ENCODE measurements at regions of chr17 and their contacts with region 1.

Region 1: GRCh38 chr17:29010586-29010985 is 4.8 kb upstream of the SEZ6 start:
- DNase-seq: no peak
- H3K4me3 ChIP-seq: no peak overlapping the region
- H3K27ac ChIP-seq: no peak overlapping the region
- H3K4me1 ChIP-seq: no peaks in the 10 kb centered on the region
- CTCF ChIP-seq: no peak

Region 2: GRCh38 chr17:28661635-28662537 is 348.7 kb before region 1 on chr17 and contains the starts of genes SDF2 and SUPT6H:
- CTCF ChIA-PET with region 1: no interaction called
- POLR2A ChIA-PET with region 1: no interaction called
- intact Hi-C with region 1: no loop called
- DNase-seq: peak; percentile 90
- H3K4me3 ChIP-seq: peak within 1 kb of the TSS; percentile 95
- H3K27ac ChIP-seq: peak within 1 kb of the TSS; percentile 88
- H3K4me1 ChIP-seq: peaks cover 22% of the 10 kb centered on the region
- CTCF ChIP-seq: no peak
- total RNA-seq, gene SDF2: 31.2 and 31.8 TPM in 2 replicates
- total RNA-seq, gene SUPT6H: 32.1 and 33.7 TPM in 2 replicates

Region 3: DNA sequence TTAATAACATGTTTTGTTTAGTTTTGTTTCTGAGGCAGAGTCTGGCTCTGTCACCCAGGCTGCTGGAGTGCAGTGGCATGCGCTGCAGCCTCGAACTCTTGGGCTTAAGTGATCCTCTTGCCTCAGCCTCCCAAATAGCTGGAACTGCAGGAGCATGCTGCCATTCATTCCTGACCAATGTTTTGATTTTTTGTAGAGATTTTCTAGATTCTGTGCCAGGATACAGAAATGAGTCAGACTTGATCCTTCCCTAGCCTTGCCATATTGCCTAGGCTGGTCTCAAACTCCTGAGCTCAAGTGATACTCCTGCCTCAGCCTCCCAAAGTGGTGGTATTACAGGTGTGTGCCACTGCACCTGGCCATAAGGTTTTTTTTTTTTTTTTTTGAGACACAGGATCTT is 397.3 kb after region 1 on chr17:
- CTCF ChIA-PET with region 1: interaction called, 10 read pairs
- POLR2A ChIA-PET with region 1: no interaction called
- intact Hi-C with region 1: no loop called
- DNase-seq: no peak
- H3K4me3 ChIP-seq: no peak overlapping the region
- H3K27ac ChIP-seq: no peak overlapping the region
- H3K4me1 ChIP-seq: no peaks in the 10 kb centered on the region
- CTCF ChIP-seq: no peak

Measured in OCI-LY7 (cell line).